Activated T-helper 2 cell treated with anti-CD3 and anti-CD28 coated beads, Interferon-gamma antibody, Interleukin-2, Interleukin-4, amounts not matched to agents 10 μg/mL and 5 μg/mL and 100 μg/mL, durations not matched to agents 14 hours and 24 hours and 36 hours (primary cell): ENCODE measurements at regions of chr20 and their contacts with region 1.

Region 1: DNA sequence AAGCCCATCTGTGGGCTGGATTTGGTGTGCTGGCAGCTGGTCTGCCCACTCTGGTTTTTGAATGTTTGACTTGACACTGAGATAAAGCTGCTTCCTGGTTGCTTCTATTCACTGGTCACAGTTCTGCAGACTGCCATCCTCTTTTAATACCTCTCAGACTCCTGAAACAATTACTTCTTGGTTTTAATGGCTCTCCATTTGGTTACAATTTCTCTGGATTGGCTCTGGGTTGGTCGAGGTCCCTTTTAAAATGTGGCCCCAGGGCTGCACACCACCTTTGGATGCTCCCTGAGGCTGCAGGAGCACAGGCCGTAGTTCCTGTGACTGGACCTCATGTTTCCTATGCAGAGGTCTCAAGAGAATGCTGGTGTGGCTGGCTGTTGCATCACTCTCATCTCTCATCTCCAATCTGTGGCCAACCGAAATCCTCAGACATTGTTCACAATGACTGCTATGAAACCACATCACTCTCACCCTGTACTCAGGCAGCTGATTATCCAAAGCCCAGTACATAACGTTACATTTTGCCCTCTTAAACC is 98.5 kb downstream of the INSM1 start:
- DNase-seq: no peak
- H3K4me3 Mint-ChIP-seq: no peak overlapping the region
- H3K27ac Mint-ChIP-seq: peak overlapping the region; percentile 73
- H3K4me1 Mint-ChIP-seq: peaks cover 34% of the 10 kb centered on the region
- H3K27me3 Mint-ChIP-seq: peaks cover 2% of the 10 kb centered on the region

Region 2: DNA sequence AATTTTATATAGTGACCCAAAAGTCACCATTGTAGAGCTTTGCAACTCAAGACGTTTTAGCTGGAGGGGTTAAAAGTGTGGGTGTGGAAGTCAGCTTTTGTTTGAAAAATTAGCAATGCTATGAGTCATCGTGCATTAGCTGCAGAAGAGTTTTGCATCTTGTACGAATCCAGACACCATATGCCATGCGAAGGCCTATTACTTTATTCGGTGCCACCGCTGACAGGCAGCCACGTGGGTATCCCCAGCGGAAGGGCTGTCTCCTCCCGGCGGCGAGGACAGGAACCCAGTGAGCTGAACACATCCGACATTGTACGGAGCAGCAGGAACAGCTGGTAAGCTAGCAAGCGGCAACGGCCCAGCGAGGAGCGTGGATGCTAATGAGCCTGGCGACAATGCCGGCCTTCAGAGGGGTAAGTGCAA is 14.1 kb before region 1 on chr20:
- intact Hi-C with region 1: loop called (anchors 1 kb)
- DNase-seq: peak; percentile 39
- H3K4me3 Mint-ChIP-seq: peak overlapping the region; percentile 82
- H3K27ac Mint-ChIP-seq: peak overlapping the region; percentile 82
- H3K4me1 Mint-ChIP-seq: peaks cover 43% of the 10 kb centered on the region
- H3K27me3 Mint-ChIP-seq: no peaks in the 10 kb centered on the region

Region 3: GRCh38 chr20:20480689-20481088 is 14.3 kb after region 1 on chr20:
- intact Hi-C with region 1: loop called (anchors 2 kb)
- DNase-seq: no peak
- H3K4me3 Mint-ChIP-seq: peak overlapping the region; percentile 19
- H3K27ac Mint-ChIP-seq: peak overlapping the region; percentile 81
- H3K4me1 Mint-ChIP-seq: peaks cover 43% of the 10 kb centered on the region
- H3K27me3 Mint-ChIP-seq: no peaks in the 10 kb centered on the region

Region 4: DNA sequence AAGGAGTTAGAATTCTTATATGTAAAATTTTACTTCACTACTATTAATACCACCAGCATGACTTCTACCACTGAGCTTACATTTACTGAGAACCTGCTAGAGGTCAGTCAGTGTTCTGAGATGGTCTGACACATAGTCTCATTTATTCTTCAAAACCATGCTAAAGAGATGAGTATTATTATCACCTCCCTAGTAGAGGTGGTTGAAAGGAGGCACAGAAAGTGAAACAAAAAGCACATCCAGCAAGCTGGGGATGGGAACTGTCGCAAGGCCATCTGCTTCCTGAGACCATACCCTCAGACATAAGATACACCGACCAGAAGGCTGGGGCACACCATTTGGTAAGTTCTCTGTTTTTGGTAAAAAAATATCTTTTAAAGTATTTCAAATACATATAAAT is 39.1 kb after region 1 on chr20:
- intact Hi-C with region 1: loop called (anchors 5 kb)
- DNase-seq: no peak
- H3K4me3 Mint-ChIP-seq: no peak overlapping the region
- H3K27ac Mint-ChIP-seq: no peak overlapping the region
- H3K4me1 Mint-ChIP-seq: peaks cover 30% of the 10 kb centered on the region
- H3K27me3 Mint-ChIP-seq: no peaks in the 10 kb centered on the region